ENCODE measurements at regions of chr4 and their contacts with region 1.

Region 1: GRCh38 chr4:26583865-26584652 is at the start of gene TBC1D19:
- DNase-seq: peak; percentile 81 to 95 (median 86)
- ATAC-seq: peak; percentile 86
- H3K4me3 ChIP-seq: peak within 1 kb of the TSS; percentile 67 to 70
- H3K4me3 Mint-ChIP-seq: peak within 1 kb of the TSS; percentile 94
- H3K27ac ChIP-seq: peak within 1 kb of the TSS; percentile 87 to 97
- H3K27ac Mint-ChIP-seq: peak within 1 kb of the TSS; percentile 91
- H3K4me1 ChIP-seq: peaks cover 13% of the 10 kb centered on the region
- H3K4me1 Mint-ChIP-seq: peaks cover 25% of the 10 kb centered on the region
- H3K27me3 ChIP-seq: no peaks in the 10 kb centered on the region
- H3K27me3 Mint-ChIP-seq: peaks cover 1% of the 10 kb centered on the region
- CTCF ChIP-seq: no peak
- total RNA-seq, gene TBC1D19: 3.4 to 4.4 TPM

Region 2: DNA sequence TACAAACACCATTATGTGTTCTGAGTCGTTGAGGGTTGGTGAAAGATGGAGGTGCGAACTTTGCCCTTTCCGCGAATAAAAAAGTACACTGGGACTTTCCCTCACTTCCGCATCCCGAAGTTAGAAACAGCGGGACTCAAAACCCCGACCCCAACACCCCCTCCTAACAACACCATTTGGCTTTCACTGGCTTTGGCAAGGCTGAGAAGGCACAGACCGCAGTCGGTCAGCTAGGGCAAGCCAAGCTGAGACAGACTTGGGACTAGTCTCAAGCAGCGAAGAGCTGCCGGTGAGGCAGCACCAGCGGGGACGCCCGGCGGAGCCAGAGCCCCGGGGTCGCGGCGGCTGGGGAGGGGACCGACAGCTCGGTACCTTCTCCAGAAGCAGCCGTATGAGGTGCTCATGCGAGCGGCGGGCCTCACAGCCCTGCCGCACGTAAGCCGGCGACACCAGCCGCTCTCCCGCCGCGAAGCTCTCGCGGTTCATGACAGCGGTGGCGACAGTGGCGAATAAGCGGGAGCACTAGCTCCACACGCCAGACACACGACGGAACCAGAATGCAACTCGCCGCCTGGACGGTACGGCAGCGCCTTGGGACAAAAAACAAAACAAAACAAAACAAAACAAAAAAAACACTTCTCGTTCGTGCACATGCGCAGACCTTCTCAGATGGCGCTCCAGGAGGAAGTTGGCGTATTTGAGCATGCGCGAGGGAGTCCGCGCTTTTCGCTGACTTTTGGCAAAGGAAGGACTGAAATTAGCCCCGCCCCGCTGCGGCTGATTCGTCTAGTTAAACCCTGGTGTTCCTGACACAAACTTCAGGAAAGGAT is 1424.0 kb before region 1 on chr4 and contains the start of gene SEPSECS:
- CTCF ChIA-PET with region 1: no interaction called
- POLR2A ChIA-PET with region 1: no interaction called
- intact Hi-C with region 1: loop called (anchors 10 kb)
- DNase-seq: peak; percentile 82 to 99 (median 94)
- ATAC-seq: peak; percentile 79
- H3K4me3 ChIP-seq: peak within 1 kb of the TSS; percentile 60 to 79
- H3K4me3 Mint-ChIP-seq: peak within 1 kb of the TSS; percentile 91
- H3K27ac ChIP-seq: peak within 1 kb of the TSS; percentile 97 to 98
- H3K27ac Mint-ChIP-seq: peak within 1 kb of the TSS; percentile 94
- H3K4me1 ChIP-seq: peaks cover 18% of the 10 kb centered on the region
- H3K4me1 Mint-ChIP-seq: peaks cover 52% of the 10 kb centered on the region
- H3K27me3 ChIP-seq: no peaks in the 10 kb centered on the region
- H3K27me3 Mint-ChIP-seq: no peaks in the 10 kb centered on the region
- CTCF ChIP-seq: no peak
- total RNA-seq, gene SEPSECS: 12.5 to 13.4 TPM

Region 3: GRCh38 chr4:25312496-25313200 is 1271.4 kb before region 1 on chr4 and contains the start of gene ZCCHC4:
- CTCF ChIA-PET with region 1: no interaction called
- POLR2A ChIA-PET with region 1: no interaction called
- intact Hi-C with region 1: loop called in 1 of 2 experiments (anchors 10 kb)
- DNase-seq: peak; percentile 80 to 97 (median 89)
- ATAC-seq: peak; percentile 99
- H3K4me3 ChIP-seq: peak within 1 kb of the TSS; percentile 83 to 95
- H3K4me3 Mint-ChIP-seq: peak within 1 kb of the TSS; percentile 99
- H3K27ac ChIP-seq: peak within 1 kb of the TSS; percentile 48 to 73
- H3K27ac Mint-ChIP-seq: peak within 1 kb of the TSS; percentile 96
- H3K4me1 ChIP-seq: peaks cover 9% of the 10 kb centered on the region
- H3K4me1 Mint-ChIP-seq: peaks cover 27% of the 10 kb centered on the region
- H3K27me3 ChIP-seq: no peaks in the 10 kb centered on the region
- H3K27me3 Mint-ChIP-seq: peaks cover 8% of the 10 kb centered on the region
- CTCF ChIP-seq: peak; percentile 99
- total RNA-seq, gene ZCCHC4: 6.5 to 9.9 TPM

Region 4: DNA sequence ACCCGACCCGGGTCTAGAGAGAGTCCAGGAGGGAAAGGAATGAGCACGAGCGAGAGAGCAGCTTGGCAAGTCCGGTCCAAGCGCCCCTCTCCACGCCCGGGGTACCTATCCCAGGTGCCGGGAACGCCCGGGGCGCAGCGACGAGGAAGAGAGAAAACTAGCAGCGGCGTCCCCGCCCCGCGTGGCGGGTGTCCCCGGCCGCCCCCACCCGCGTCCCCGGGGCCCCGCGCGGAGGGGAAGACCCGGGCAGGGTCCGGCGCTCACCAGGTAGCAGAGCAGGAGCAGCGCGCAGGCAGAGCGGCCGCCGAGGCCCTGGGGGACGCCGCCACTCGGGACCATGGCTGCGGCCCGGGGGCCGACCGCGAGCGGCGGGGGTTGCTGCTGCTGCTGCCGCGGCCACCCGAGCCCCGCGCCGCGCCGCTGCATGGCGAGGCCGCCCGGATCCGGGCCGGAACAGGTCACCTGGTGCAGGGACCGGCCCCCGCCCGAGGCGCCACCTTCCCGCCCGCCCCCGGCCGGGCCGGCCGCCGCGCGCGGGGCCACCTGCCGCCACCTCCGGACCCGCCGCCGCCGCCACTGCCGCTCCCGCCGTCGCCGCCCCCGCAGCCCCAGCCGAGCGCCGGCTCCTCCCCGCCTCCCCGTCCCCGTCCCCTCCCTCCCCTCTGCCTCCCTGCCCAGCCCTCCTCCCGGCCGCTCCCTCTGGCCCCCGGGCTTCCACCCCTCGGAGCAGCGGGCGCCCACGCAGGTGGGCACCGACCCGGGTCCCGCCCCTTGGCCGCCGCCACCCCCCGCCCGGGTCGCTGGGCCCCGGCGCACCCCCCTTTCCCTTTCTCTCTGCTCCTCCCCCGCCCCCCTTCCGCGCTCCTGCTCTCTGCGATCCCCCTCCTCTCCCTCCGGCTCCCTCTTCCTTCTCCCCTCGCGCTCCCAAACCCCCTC is 721.4 kb before region 1 on chr4 and contains the start of gene SEL1L3:
- CTCF ChIA-PET with region 1: no interaction called
- POLR2A ChIA-PET with region 1: no interaction called
- intact Hi-C with region 1: loop called (anchors 5 to 10 kb)
- DNase-seq: peak in 8 of 9 experiments; percentile 34 to 71 (median 51)
- ATAC-seq: peak; percentile 37
- H3K4me3 ChIP-seq: peak within 1 kb of the TSS; percentile 71 to 72
- H3K4me3 Mint-ChIP-seq: peak within 1 kb of the TSS; percentile 100
- H3K27ac ChIP-seq: peak within 1 kb of the TSS; percentile 54 to 80
- H3K27ac Mint-ChIP-seq: peak within 1 kb of the TSS; percentile 91
- H3K4me1 ChIP-seq: peaks cover 40% of the 10 kb centered on the region
- H3K4me1 Mint-ChIP-seq: peaks cover 41% of the 10 kb centered on the region
- H3K27me3 ChIP-seq: no peaks in the 10 kb centered on the region
- H3K27me3 Mint-ChIP-seq: no peaks in the 10 kb centered on the region
- CTCF ChIP-seq: no peak
- total RNA-seq, gene SEL1L3: 31.2 to 33.7 TPM

Region 5: GRCh38 chr4:26281881-26282280 is 302.2 kb before region 1 on chr4:
- CTCF ChIA-PET with region 1: no interaction called
- POLR2A ChIA-PET with region 1: no interaction called
- intact Hi-C with region 1: no loop called
- DNase-seq: no peak
- ATAC-seq: no peak
- H3K4me3 ChIP-seq: no peak overlapping the region
- H3K4me3 Mint-ChIP-seq: no peak overlapping the region
- H3K27ac ChIP-seq: no peak overlapping the region
- H3K27ac Mint-ChIP-seq: no peak overlapping the region
- H3K4me1 ChIP-seq: no peaks in the 10 kb centered on the region
- H3K4me1 Mint-ChIP-seq: no peaks in the 10 kb centered on the region
- H3K27me3 ChIP-seq: peaks cover 0 to 5% of the 10 kb centered on the region in 2 experiments
- H3K27me3 Mint-ChIP-seq: no peaks in the 10 kb centered on the region
- CTCF ChIP-seq: no peak

Region 6: DNA sequence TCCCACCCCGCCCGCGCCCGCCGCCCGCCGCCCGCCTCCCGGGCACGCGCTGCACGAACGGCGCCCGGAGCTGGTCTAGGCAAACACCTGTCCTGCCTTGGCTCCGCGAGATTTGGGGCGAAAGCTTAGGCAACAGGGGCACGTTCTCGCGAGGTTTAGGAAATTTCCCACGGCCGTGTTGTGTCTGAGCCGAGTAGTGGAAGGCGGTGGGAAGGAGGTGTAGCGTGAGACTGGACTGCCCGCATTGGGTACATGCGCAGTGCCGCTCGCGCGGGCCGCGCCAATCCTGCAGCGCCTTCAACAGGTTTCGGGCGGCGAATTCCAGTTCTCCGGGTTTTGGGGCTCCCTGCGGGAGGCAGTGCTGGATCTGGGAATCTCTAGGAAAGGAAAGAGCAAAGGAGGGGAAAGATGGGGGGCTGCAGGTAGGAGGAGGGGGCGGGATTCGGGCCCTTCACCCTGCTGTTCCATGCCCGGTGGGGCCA is 264.6 kb before region 1 on chr4:
- CTCF ChIA-PET with region 1: no interaction called
- POLR2A ChIA-PET with region 1: interaction called, 6 read pairs
- intact Hi-C with region 1: loop called in 1 of 2 experiments (anchors 2 kb)
- DNase-seq: peak; percentile 91 to 99 (median 96)
- ATAC-seq: peak; percentile 60
- H3K4me3 ChIP-seq: peak overlapping the region; percentile 91 to 100
- H3K4me3 Mint-ChIP-seq: peak overlapping the region; percentile 99
- H3K27ac ChIP-seq: peak overlapping the region; percentile 83 to 89
- H3K27ac Mint-ChIP-seq: peak overlapping the region; percentile 100
- H3K4me1 ChIP-seq: peaks cover 14% of the 10 kb centered on the region
- H3K4me1 Mint-ChIP-seq: peaks cover 37% of the 10 kb centered on the region
- H3K27me3 ChIP-seq: no peaks in the 10 kb centered on the region
- H3K27me3 Mint-ChIP-seq: no peaks in the 10 kb centered on the region
- CTCF ChIP-seq: no peak

Region 7: DNA sequence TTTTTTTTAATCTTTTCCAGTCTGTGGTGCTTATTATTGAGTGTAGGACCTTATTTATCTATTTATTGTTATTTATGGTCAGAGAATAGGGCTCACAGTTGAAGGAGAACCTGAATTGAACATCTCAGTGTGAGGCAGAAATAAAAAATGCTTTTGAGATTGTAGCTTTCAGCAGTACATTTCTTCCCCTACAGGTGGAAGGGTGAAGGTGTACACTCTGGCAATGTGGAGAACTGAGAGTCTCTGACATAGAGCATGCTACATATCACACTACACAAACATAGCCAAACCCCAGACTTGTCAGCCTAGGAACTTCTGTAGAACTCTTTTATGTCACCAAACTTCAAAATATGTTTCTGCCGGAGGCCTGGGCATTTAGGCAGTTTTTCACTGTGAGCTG is 416.8 kb after region 1 on chr4:
- CTCF ChIA-PET with region 1: no interaction called
- POLR2A ChIA-PET with region 1: no interaction called
- intact Hi-C with region 1: loop called in 1 of 2 experiments (anchors 5 kb)
- DNase-seq: peak in 2 of 9 experiments; percentile 36 to 56
- ATAC-seq: peak; percentile 76
- H3K4me3 ChIP-seq: no peak overlapping the region
- H3K4me3 Mint-ChIP-seq: no peak overlapping the region
- H3K27ac ChIP-seq: no peak overlapping the region
- H3K27ac Mint-ChIP-seq: peak overlapping the region; percentile 73
- H3K4me1 ChIP-seq: peaks cover 15% of the 10 kb centered on the region
- H3K4me1 Mint-ChIP-seq: peaks cover 50% of the 10 kb centered on the region
- H3K27me3 ChIP-seq: no peaks in the 10 kb centered on the region
- H3K27me3 Mint-ChIP-seq: no peaks in the 10 kb centered on the region
- CTCF ChIP-seq: peak; percentile 47

Measured in CD8-positive, alpha-beta T cell (primary cell).